Heart left ventricle (tissue), 16 donors: ENCODE measurements at regions of chr9 and their contacts with region 1.

Region 1: DNA sequence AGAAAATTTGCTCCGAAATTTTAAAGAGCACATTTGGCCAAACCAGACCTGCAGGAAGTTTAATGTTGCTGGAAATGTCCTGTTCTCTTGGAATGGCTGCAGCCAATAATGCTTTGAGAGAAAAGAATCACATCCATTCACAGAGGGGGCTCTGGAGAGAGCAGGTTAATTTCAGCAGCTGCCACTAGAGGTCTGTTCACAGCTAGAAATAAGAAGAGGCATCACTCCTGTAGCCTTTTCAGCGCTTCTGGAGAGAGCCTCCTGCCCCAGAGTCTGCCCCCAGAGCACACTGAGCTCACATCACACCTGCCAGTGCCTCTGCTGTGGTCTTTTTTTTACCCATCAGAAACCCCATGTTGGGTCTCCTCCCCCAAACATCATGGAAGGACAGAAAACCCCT is 124.8 kb upstream of the RAD23B start:
- DNase-seq: no peak
- ATAC-seq: peak in 3 of 4 donors; percentile 65 to 68 (median 66)
- H3K4me3 ChIP-seq: no peak overlapping the region
- H3K27ac ChIP-seq: no peak overlapping the region
- H3K4me1 ChIP-seq: no peaks in the 10 kb centered on the region
- H3K27me3 ChIP-seq: peaks cover 0 to 2% (median 0%) of the 10 kb centered on the region in 9 donors
- CTCF ChIP-seq: peak in 8 of 12 donors; percentile 25 to 49 (median 34)
- POLR2A ChIP-seq: no peak

Region 2: DNA sequence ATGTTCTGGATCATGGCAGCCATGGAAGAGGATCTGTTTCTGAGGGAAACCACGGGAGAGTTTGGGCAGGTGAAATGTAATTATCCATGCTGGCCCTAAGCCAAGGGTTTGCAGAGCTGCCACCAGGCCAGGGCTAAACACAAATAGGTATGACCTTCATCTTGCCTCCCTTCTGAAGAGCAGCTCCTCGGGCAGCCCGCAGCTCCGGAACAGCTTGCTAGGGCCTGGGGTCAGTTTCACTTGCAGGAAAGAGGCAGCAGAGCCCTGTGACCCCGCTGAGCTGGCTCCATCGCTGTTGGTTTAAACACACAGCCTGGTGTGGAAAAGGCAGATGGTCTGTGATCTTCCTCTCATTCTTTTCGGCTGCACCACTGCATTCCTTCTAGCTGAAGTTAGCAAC is 1322.6 kb before region 1 on chr9:
- intact Hi-C with region 1: loop called in 1 of 10 experiments (anchors 10 kb)
- DNase-seq: peak in 1 of 5 donors; percentile 29
- ATAC-seq: peak in 3 of 4 donors; percentile 30 to 57 (median 50)
- H3K4me3 ChIP-seq: no peak overlapping the region
- H3K27ac ChIP-seq: no peak overlapping the region
- H3K4me1 ChIP-seq: peaks cover 0 to 8% (median 0%) of the 10 kb centered on the region in 12 donors
- H3K27me3 ChIP-seq: no peaks in the 10 kb centered on the region
- CTCF ChIP-seq: no peak
- POLR2A ChIP-seq: no peak

Region 3: GRCh38 chr9:106753155-106753671 is 405.1 kb before region 1 on chr9:
- intact Hi-C with region 1: no loop called
- DNase-seq: no peak
- ATAC-seq: no peak
- H3K4me3 ChIP-seq: no peak overlapping the region
- H3K27ac ChIP-seq: no peak overlapping the region
- H3K4me1 ChIP-seq: peaks cover 0 to 11% (median 0%) of the 10 kb centered on the region in 12 donors
- H3K27me3 ChIP-seq: no peaks in the 10 kb centered on the region
- CTCF ChIP-seq: no peak
- POLR2A ChIP-seq: no peak